Activated T-helper 2 cell treated with anti-CD3 and anti-CD28 coated beads, Interferon-gamma antibody, Interleukin-2, Interleukin-4, amounts not matched to agents 10 μg/mL and 5 μg/mL and 100 μg/mL, durations not matched to agents 14 hours and 24 hours and 36 hours (primary cell): ENCODE measurements at regions of chr1 and their contacts with region 1.

Region 1: GRCh38 chr1:168234846-168235547 is 9.2 kb downstream of the SFT2D2 start:
- DNase-seq: peak; percentile 51
- H3K4me3 Mint-ChIP-seq: peak overlapping the region; percentile 53
- H3K27ac Mint-ChIP-seq: peak overlapping the region; percentile 94
- H3K4me1 Mint-ChIP-seq: peaks cover 70% of the 10 kb centered on the region
- H3K27me3 Mint-ChIP-seq: no peaks in the 10 kb centered on the region

Region 2: DNA sequence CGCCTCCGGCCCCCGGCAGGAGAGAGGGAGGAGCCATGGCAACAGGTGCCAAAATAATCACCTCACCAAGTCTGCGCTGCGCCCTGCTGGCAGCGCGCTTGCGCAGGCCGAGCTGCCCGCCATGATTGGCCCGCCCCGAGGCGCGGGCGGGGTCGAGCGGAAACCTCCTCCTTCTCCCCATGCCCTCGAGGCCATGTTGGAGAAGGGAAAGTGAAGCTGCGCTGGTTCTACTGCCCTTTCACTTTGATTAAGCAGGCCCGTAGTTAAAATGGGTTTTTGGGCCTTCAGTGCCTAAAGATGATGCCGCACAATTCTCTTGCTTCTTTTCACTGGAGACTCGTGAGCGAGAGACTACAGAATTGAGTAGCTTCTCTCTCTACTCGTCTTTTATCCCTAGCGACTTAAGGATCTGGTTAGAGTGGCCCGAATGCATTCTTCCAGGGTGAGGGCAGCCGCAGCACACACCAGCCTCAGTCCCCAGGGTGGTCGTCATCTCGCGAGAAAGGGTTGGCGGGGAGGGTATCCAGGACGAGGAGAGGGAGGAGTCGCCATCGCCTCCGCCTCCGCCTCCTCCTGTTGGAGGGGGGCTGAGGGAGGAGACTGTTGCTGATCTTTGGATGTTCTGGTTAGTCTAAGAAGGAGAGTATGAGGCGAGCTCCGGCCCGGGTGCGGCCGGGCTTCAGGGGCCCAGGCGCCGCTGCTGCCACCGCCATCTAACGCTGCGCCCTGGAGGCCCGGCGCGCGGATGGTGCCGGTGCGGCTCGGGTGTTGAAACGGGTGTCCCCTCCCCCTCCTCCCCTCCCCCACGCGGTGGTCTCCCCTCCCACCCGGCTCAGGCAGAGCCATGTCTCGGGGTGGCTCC is 298.7 kb before region 1 on chr1 and contains the start of gene DCAF6:
- intact Hi-C with region 1: loop called (anchors 5 kb)
- DNase-seq: peak; percentile 97
- H3K4me3 Mint-ChIP-seq: peak within 1 kb of the TSS; percentile 94
- H3K27ac Mint-ChIP-seq: peak within 1 kb of the TSS; percentile 99
- H3K4me1 Mint-ChIP-seq: peaks cover 35% of the 10 kb centered on the region
- H3K27me3 Mint-ChIP-seq: no peaks in the 10 kb centered on the region
- total RNA-seq, gene DCAF6: 29.6 and 33.1 TPM in 2 replicates

Region 3: DNA sequence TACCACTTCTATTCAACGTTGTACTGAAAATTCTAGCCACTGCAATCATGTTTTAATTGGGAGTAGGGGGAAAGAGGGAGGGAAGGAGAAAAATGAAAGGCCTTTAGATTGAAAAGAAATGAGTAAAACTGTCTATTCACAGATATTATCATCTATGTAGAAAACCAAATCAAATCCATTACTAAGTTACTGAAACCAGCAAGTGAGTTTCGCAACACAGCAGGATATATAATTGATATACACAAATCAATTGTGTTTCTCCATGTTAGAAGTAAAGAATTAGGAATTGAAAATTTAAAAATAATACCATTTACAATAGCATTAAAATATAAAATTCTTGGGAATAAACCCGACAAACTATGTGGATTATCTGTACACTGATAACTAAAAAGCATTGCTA is 10.0 kb after region 1 on chr1:
- intact Hi-C with region 1: loop called (anchors 1 kb)
- DNase-seq: no peak
- H3K4me3 Mint-ChIP-seq: no peak overlapping the region
- H3K27ac Mint-ChIP-seq: peak overlapping the region; percentile 24
- H3K4me1 Mint-ChIP-seq: peaks cover 74% of the 10 kb centered on the region
- H3K27me3 Mint-ChIP-seq: no peaks in the 10 kb centered on the region

Region 4: GRCh38 chr1:168342572-168343280 is 107.7 kb after region 1 on chr1:
- intact Hi-C with region 1: loop called (anchors 1 kb)
- DNase-seq: peak; percentile 82
- H3K4me3 Mint-ChIP-seq: no peak overlapping the region
- H3K27ac Mint-ChIP-seq: peak overlapping the region; percentile 80
- H3K4me1 Mint-ChIP-seq: peaks cover 82% of the 10 kb centered on the region
- H3K27me3 Mint-ChIP-seq: no peaks in the 10 kb centered on the region

Region 5: DNA sequence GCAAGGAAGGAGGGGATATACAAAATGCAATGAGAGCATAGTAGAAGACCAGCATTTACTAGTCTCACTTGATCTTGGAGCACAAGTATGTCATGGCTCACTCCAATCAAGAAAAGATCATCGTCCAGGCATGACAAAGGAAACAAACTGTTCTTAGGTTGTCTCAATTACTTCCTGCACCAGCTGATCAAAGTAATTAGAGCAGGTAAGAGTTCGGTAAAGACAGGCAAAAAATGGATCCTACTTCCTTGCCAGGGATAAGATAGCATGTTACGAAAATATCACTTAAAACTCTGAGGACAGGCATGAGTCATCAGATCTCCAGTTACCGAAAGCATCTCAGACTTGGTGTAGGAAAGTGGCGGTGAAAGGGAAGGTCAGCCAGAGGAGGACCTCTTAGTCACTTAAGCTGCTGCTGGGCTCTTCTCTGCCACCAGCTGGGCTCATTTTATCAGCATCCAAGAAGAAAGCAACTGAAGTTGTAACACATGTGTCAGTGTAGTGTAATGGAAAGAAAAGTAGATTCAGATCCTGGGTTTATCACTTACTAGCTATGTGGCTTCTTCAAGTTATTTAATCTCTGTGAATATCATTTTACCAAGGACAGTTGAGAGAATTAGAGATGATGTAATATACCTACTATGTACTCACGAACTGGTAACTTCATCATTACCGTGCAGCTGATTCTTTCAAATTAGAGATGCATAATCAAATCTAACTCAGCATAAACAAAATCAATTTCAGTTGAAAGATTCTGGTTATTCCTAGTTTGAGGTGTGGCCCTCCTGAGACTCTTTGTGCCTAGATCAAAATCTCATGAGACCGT is 388.2 kb after region 1 on chr1:
- intact Hi-C with region 1: no loop called
- DNase-seq: no peak
- H3K4me3 Mint-ChIP-seq: no peak overlapping the region
- H3K27ac Mint-ChIP-seq: no peak overlapping the region
- H3K4me1 Mint-ChIP-seq: no peaks in the 10 kb centered on the region
- H3K27me3 Mint-ChIP-seq: peaks cover 8% of the 10 kb centered on the region

Region 6: GRCh38 chr1:169106095-169106920 is 871.3 kb after region 1 on chr1 and contains the start of gene ATP1B1:
- intact Hi-C with region 1: loop called (anchors 10 kb)
- DNase-seq: peak; percentile 79
- H3K4me3 Mint-ChIP-seq: peak within 1 kb of the TSS; percentile 88
- H3K27ac Mint-ChIP-seq: peak within 1 kb of the TSS; percentile 78
- H3K4me1 Mint-ChIP-seq: peaks cover 42% of the 10 kb centered on the region
- H3K27me3 Mint-ChIP-seq: peaks cover 9% of the 10 kb centered on the region
- total RNA-seq, gene ATP1B1: 12.6 and 13.5 TPM in 2 replicates

Region 7: GRCh38 chr1:169794530-169795416 is 1559.8 kb after region 1 on chr1 and contains the start of gene METTL18:
- intact Hi-C with region 1: loop called (anchors 10 kb)
- DNase-seq: peak; percentile 92
- H3K4me3 Mint-ChIP-seq: peak within 1 kb of the TSS; percentile 92
- H3K27ac Mint-ChIP-seq: peak within 1 kb of the TSS; percentile 98
- H3K4me1 Mint-ChIP-seq: peaks cover 51% of the 10 kb centered on the region
- H3K27me3 Mint-ChIP-seq: no peaks in the 10 kb centered on the region
- total RNA-seq, gene METTL18: 8.9 and 10.9 TPM in 2 replicates